Heart left ventricle (tissue), 16 donors: ENCODE measurements at regions of chr6 and their contacts with region 1.

Region 1: GRCh38 chr6:149037051-149037671 is 280.4 kb upstream of the TAB2 start:
- DNase-seq: no peak
- ATAC-seq: no peak
- H3K4me3 ChIP-seq: no peak overlapping the region
- H3K27ac ChIP-seq: peak overlapping the region in 1 of 12 donors; percentile 34
- H3K4me1 ChIP-seq: peaks cover 0 to 12% (median 0%) of the 10 kb centered on the region in 12 donors
- H3K27me3 ChIP-seq: no peaks in the 10 kb centered on the region
- CTCF ChIP-seq: no peak
- POLR2A ChIP-seq: no peak

Region 2: GRCh38 chr6:149082286-149082707 is 45.1 kb after region 1 on chr6:
- intact Hi-C with region 1: loop called in 5 of 10 experiments (anchors 5 kb)
- DNase-seq: peak; percentile 70 to 88 (median 76)
- ATAC-seq: peak in 3 of 4 donors; percentile 57 to 73 (median 69)
- H3K4me3 ChIP-seq: no peak overlapping the region
- H3K27ac ChIP-seq: no peak overlapping the region
- H3K4me1 ChIP-seq: peaks cover 0 to 21% (median 14%) of the 10 kb centered on the region in 12 donors
- H3K27me3 ChIP-seq: no peaks in the 10 kb centered on the region
- CTCF ChIP-seq: peak; percentile 70 to 89 (median 80)
- POLR2A ChIP-seq: no peak

Region 3: DNA sequence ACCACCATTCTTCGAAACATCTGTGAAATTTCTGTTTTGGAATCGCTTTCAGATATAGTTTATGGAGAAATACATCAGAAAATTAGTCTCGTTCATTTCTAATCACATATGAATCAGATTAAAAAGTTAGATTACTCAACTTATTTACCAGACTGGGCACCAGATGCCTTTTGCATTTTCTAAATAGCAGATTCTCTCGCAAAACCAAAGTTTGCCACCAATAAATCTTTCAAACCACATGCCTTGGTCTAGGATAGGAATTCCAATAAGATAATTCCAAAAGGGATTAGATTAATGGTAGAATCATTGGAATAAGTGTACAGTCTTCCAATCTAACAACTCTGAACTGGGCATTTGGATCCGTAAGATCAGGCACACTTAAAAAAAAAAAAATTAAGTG is 120.0 kb after region 1 on chr6:
- intact Hi-C with region 1: loop called in 1 of 10 experiments (anchors 5 kb)
- DNase-seq: no peak
- ATAC-seq: no peak
- H3K4me3 ChIP-seq: no peak overlapping the region
- H3K27ac ChIP-seq: no peak overlapping the region
- H3K4me1 ChIP-seq: peaks cover 0 to 20% (median 0%) of the 10 kb centered on the region in 12 donors
- H3K27me3 ChIP-seq: no peaks in the 10 kb centered on the region
- CTCF ChIP-seq: no peak
- POLR2A ChIP-seq: no peak